Dendritic cell treated with granulocyte-macrophage colony-stimulating factor and Interleukin-4, amounts not matched to agents 40 ng/mL and 50 ng/mL, for 4 days (primary cell): ENCODE measurements at regions of chr20 and their contacts with region 1.

Region 1: DNA sequence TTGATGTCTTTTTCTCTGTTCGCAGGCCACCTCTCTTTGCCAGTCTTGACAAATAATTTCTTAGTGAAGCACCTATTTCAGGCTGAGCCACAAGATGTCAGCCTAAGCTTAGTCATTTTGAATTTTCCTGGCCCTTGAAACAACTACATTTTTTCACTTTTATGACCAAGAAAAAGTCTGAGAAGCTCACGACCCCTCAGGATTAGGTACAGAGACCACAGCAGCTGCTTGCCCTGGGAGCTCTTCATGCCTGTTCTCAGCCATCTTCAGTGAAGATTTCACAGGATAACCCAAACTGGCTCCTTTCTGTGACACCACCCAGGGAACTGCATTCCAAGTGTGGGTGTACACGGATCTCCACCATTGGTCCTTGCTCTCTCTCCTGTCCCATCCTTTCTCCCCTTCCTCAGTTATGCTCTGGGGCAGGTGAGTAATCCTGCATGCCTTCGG is 38.4 kb upstream of the SPTLC3 start:
- H3K4me3 Mint-ChIP-seq: no peak overlapping the region
- H3K27ac Mint-ChIP-seq: no peak overlapping the region
- H3K4me1 Mint-ChIP-seq: no peaks in the 10 kb centered on the region
- H3K27me3 Mint-ChIP-seq: no peaks in the 10 kb centered on the region

Region 2: DNA sequence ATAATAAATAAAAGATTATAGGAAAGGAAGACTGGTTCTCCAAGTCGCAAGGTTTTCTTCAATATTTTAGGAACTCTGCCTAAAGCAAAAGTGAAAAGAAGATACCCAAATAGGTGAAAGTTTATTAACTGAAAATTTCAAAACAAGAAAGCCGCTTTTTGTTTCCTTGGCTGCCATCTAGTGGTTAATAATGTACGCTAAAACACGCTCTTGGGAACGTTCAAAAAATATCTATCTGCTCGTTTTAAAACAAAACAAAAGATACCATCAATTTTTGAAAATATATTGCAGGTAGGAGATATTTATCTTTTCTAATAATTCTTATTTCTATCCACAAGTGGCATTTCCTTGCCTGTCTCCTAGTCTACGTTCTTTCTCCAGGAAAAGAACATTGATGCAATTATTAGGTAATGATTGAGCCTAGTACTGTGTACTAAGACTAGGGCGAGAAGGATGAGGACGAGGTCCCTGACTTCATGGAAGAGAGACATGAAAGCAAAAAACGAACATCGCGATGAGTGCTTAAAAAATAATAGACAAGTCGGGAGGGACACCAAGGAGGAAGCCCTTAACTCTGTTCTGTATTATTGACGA is 135.6 kb after region 1 on chr20:
- intact Hi-C with region 1: loop called (anchors 1 kb)
- H3K4me3 Mint-ChIP-seq: no peak overlapping the region
- H3K27ac Mint-ChIP-seq: no peak overlapping the region
- H3K4me1 Mint-ChIP-seq: no peaks in the 10 kb centered on the region
- H3K27me3 Mint-ChIP-seq: no peaks in the 10 kb centered on the region

Region 3: DNA sequence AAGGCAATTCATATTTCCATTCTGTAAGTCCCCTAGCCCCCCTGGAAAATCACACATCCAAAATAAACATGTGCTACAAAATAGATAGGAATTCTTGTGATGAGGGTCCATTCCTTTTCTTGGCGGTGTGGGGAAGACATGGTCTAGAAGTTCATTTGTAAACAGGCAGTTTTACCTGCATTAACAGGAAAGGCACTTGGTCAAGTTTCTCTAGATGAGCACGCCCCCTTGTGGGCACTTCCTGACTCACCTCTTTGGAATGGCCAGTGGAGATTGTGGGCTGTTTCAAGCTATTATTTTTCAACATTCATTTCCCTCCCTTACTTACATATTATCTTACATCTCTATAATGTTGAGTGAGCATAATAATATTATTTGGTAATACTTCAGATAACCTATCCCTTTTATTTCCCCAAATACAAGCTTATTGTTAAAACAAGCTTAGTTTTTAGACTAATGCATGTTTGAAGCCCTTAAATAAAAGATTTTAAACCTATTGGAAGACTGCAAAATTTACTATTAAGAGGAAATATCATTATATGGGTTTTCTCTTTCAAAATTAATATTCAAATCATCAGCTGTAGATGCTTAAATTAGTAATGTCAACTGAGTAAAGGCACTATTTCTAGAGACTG is 576.2 kb after region 1 on chr20:
- intact Hi-C with region 1: loop called (anchors 2 kb)
- H3K4me3 Mint-ChIP-seq: no peak overlapping the region
- H3K27ac Mint-ChIP-seq: no peak overlapping the region
- H3K4me1 Mint-ChIP-seq: no peaks in the 10 kb centered on the region
- H3K27me3 Mint-ChIP-seq: no peaks in the 10 kb centered on the region